Ascending aorta (tissue), 2 donors: ENCODE measurements at regions of chr13 and their contacts with region 1.

Region 1: DNA sequence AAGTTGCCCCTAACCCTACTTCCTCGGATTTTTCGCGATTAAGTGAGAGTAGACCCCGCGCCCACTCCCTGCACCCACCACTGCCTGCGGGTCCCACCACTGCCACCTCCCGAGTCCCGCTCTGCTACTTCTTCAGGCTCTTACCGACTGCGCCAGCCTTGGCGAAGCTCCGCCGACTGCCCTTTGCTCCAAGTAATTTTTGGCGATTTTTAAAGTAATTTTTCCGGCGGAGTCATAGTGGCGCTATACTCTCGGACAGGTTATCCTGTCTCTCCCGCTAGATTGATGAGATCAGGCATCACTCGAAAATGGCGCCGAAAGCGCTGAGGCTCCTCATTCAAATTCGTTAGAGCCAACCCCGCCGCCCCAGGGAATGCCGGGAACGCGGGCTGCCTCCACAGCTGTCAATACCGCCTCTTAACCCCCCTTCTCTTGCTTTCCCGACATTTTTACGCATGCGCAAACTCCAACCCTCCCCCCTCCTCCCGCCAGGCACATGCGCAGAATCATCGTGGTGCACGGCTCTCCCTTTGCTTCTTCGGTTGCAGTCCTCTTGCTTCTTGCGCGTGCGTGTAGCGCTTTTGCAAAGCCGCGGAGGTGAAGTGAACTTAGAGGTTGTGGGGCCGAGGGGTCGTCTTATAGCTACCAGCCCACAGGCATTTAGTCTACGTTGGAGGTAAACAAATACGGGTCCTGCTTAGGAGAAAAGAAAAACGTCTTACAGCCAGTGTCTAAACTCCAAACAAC is 66.6 kb downstream of the KCNRG start:
- DNase-seq: peak; percentile 95 to 99
- H3K4me3 ChIP-seq: peak overlapping the region; percentile 78 to 95
- H3K27ac ChIP-seq: peak overlapping the region; percentile 89 to 96
- H3K4me1 ChIP-seq: peaks cover 0 to 6% of the 10 kb centered on the region in 2 donors
- H3K27me3 ChIP-seq: no peaks in the 10 kb centered on the region
- CTCF ChIP-seq: peak in 1 of 3 experiments; percentile 38

Region 2: GRCh38 chr13:49853535-49853934 is 228.3 kb before region 1 on chr13:
- intact Hi-C with region 1: no loop called
- DNase-seq: no peak
- H3K4me3 ChIP-seq: no peak overlapping the region
- H3K27ac ChIP-seq: no peak overlapping the region
- H3K4me1 ChIP-seq: no peaks in the 10 kb centered on the region
- H3K27me3 ChIP-seq: no peaks in the 10 kb centered on the region
- CTCF ChIP-seq: no peak

Region 3: GRCh38 chr13:49936085-49936940 is 145.5 kb before region 1 on chr13 and contains the start of gene SPRYD7:
- intact Hi-C with region 1: loop called (anchors 2 kb)
- DNase-seq: peak; percentile 92 to 99
- H3K4me3 ChIP-seq: peak within 1 kb of the TSS; percentile 78 to 97
- H3K27ac ChIP-seq: peak within 1 kb of the TSS; percentile 78 to 93
- H3K4me1 ChIP-seq: peaks cover 0 to 17% of the 10 kb centered on the region in 2 donors
- H3K27me3 ChIP-seq: no peaks in the 10 kb centered on the region
- CTCF ChIP-seq: peak; percentile 89 to 97 (median 94)
- total RNA-seq, gene SPRYD7: 1.7 TPM

Region 4: GRCh38 chr13:49996951-49997895 is 84.6 kb before region 1 on chr13 and contains the start of gene TRIM13:
- intact Hi-C with region 1: loop called (anchors 1 kb)
- DNase-seq: peak; percentile 74 to 96
- H3K4me3 ChIP-seq: peak within 1 kb of the TSS; percentile 96 to 99
- H3K27ac ChIP-seq: peak within 1 kb of the TSS; percentile 99 to 100
- H3K4me1 ChIP-seq: peaks cover 13 to 40% of the 10 kb centered on the region in 2 donors
- H3K27me3 ChIP-seq: no peaks in the 10 kb centered on the region
- CTCF ChIP-seq: peak; percentile 61 to 84 (median 78)
- total RNA-seq, gene TRIM13: 13.4 TPM

Region 5: DNA sequence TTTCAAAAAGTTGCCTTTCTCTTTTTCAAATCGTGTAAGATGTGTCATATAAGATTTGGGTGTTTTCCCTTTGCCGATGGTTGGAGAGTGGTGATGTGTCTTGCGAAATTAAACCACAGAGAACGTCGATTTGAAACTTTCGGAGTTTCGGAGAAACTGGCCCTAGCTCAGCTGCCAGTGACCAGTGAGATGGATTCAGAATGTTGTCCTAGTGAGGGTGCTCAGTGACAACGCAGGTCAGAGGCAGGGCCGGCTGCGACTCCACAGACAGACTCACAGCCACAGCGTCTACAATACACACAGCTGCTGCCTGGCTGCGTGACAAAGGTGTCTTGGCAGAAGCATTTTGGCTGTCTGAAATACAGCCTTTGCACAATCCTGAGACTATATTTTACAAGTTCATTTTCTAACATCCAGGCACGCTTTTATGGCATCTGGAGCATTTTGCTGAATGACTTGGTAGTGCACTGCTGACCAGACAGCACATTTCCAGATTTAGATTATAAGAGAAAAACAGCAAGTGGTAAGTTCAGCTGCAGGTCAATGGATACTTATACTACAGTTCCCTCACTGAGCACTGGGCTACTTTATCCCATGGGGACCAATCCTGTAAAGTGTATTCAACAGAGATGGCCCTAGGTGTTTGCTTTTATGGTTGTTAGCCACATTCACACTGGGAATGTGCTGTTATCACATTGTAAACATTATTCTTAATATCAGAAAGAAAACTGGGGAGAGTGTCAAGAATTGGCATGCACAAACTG is 140.9 kb after region 1 on chr13:
- intact Hi-C with region 1: loop called (anchors 10 kb)
- DNase-seq: peak; percentile 36 to 80
- H3K4me3 ChIP-seq: peak overlapping the region in 1 of 2 donors; percentile 56
- H3K27ac ChIP-seq: peak overlapping the region in 1 of 2 donors; percentile 49
- H3K4me1 ChIP-seq: no peaks in the 10 kb centered on the region
- H3K27me3 ChIP-seq: no peaks in the 10 kb centered on the region
- CTCF ChIP-seq: no peak

Region 6: GRCh38 chr13:50529154-50529882 is 447.5 kb after region 1 on chr13:
- intact Hi-C with region 1: loop called (anchors 2 kb)
- DNase-seq: peak in 1 of 2 donors; percentile 78
- H3K4me3 ChIP-seq: peak overlapping the region; percentile 24 to 48
- H3K27ac ChIP-seq: peak overlapping the region; percentile 62 to 63
- H3K4me1 ChIP-seq: peaks cover 18 to 24% of the 10 kb centered on the region in 2 donors
- H3K27me3 ChIP-seq: no peaks in the 10 kb centered on the region
- CTCF ChIP-seq: no peak

Region 7: DNA sequence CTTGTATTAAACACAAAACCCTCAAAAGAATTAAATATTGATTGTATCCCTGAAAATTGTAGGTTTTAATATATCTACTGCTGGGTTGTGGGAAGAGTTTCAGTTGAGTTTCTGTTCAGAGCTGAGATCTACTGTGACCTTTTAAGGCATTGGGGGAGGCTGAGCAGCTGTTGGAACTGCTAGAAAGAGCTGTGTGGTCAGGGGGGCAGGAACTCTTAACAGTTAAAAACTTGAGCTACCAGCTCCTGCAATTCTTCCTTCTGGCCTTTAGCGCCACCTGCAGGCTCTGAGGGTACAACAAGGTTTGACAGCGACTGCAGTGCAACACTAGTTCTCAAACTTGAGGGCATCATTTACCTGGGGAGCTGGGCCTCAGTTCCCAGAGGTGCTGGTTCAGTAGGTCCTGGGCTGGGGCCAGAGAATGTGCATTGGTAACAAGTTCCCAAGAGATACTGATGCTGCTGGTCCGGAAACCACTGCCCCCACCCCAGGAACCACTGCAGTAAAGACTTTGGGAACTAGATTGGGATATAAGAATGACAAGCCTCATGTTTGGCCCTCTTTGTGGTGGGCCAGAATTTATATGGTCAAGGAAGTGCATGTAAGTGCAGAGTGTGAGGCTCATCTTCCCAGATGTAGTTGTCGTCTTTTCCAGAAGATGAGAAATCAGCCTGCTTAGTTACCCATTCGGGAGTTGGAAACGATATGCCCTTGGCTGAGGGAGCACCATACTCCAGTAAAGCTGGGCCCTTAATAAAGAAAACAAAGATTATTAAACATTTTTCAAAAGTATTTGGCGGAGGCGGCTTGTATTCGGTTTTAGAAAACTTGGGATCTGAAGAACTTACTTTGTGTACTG is 830.3 kb after region 1 on chr13:
- intact Hi-C with region 1: loop called (anchors 2 kb)
- DNase-seq: peak; percentile 65 to 92
- H3K4me3 ChIP-seq: peak overlapping the region in 1 of 2 donors; percentile 90
- H3K27ac ChIP-seq: peak overlapping the region in 1 of 2 donors; percentile 14
- H3K4me1 ChIP-seq: peaks cover 16 to 20% of the 10 kb centered on the region in 2 donors
- H3K27me3 ChIP-seq: no peaks in the 10 kb centered on the region
- CTCF ChIP-seq: peak; percentile 69 to 87 (median 76)

Region 8: GRCh38 chr13:51202477-51203046 is 1120.7 kb after region 1 on chr13:
- intact Hi-C with region 1: no loop called
- DNase-seq: no peak
- H3K4me3 ChIP-seq: no peak overlapping the region
- H3K27ac ChIP-seq: no peak overlapping the region
- H3K4me1 ChIP-seq: no peaks in the 10 kb centered on the region
- H3K27me3 ChIP-seq: no peaks in the 10 kb centered on the region
- CTCF ChIP-seq: no peak